ENCODE measurements at regions of chr11 and their contacts with region 1.

Region 1: GRCh38 chr11:81819462-81819861 is 914.2 kb downstream of the FAM181B start:
- DNase-seq: no peak
- H3K4me3 ChIP-seq: no peak overlapping the region
- H3K27ac ChIP-seq: no peak overlapping the region
- H3K4me1 ChIP-seq: no peaks in the 10 kb centered on the region
- H3K27me3 ChIP-seq: no peaks in the 10 kb centered on the region
- CTCF ChIP-seq: no peak
- EP300 ChIP-seq: no peak
- POLR2A ChIP-seq: no peak

Region 2: DNA sequence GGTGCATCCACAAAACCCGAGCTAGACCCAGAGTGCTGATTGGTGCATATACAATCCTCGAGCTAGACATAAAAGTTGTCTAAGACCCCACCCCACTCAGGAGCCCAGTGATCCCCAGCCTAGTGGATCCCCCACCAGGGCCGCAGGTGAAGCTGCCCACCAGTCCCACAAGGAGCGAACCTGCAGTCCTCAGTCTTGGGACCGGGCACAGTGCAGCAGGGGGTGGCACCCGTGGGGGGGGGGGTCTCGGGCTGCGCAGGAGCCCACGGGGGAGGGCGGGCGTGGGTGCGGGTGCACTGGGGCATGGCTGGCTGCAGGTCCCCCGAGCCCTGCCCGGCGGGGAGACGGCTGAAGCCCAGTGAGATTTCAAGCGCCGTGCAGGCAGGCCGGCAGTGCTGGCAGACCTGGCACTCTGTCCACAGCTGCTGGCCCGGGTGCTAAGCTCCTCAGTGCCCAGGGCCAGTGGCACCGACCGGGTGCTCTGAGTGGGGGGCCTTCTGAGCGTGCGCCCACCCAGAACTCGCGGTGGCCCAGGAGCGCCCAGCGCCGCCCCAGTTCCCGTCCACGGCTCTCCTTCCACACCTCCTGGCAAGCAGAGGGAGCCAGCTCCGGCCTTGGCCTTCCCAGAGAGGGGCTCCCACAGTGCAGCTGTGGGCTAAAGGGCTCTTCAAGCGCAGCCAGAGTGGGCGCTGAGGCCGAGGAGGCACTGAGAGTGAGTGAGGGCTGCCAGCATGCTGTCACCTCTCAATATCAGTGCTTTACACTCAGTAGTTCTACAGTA is 74.9 kb before region 1 on chr11:
- in situ Hi-C with region 1: no loop called
- intact Hi-C with region 1: loop called (anchors 2 kb)
- DNase-seq: no peak
- H3K4me3 ChIP-seq: no peak overlapping the region
- H3K27ac ChIP-seq: no peak overlapping the region
- H3K4me1 ChIP-seq: no peaks in the 10 kb centered on the region
- H3K27me3 ChIP-seq: no peaks in the 10 kb centered on the region
- CTCF ChIP-seq: no peak
- EP300 ChIP-seq: no peak
- POLR2A ChIP-seq: no peak

Region 3: DNA sequence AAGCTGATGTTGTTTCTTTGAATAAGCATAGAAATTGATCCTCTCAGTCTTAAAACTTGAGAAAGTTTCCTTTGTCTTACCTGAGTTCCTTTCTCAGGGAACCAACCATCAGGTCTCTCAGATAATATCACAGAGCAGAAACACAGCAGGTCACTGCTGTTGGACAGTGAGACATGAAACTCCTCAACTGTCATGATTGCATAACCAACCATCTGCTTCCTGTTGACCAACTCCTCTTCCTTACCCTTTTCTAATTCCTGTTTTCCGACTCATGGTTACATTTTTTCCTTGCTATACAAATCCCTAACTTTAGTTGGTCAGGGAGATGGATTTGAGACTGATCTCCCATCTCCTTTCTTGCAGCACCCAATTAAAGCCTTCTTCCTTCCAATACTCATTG is 68.9 kb after region 1 on chr11:
- in situ Hi-C with region 1: no loop called
- intact Hi-C with region 1: no loop called
- DNase-seq: no peak
- H3K4me3 ChIP-seq: no peak overlapping the region
- H3K27ac ChIP-seq: no peak overlapping the region
- H3K4me1 ChIP-seq: no peaks in the 10 kb centered on the region
- H3K27me3 ChIP-seq: no peaks in the 10 kb centered on the region
- CTCF ChIP-seq: no peak
- EP300 ChIP-seq: no peak
- POLR2A ChIP-seq: no peak

Measured in transverse colon (tissue), 4 donors.